Spleen (tissue), 13 donors: ENCODE measurements at regions of chr2 and their contacts with region 1.

Region 1: DNA sequence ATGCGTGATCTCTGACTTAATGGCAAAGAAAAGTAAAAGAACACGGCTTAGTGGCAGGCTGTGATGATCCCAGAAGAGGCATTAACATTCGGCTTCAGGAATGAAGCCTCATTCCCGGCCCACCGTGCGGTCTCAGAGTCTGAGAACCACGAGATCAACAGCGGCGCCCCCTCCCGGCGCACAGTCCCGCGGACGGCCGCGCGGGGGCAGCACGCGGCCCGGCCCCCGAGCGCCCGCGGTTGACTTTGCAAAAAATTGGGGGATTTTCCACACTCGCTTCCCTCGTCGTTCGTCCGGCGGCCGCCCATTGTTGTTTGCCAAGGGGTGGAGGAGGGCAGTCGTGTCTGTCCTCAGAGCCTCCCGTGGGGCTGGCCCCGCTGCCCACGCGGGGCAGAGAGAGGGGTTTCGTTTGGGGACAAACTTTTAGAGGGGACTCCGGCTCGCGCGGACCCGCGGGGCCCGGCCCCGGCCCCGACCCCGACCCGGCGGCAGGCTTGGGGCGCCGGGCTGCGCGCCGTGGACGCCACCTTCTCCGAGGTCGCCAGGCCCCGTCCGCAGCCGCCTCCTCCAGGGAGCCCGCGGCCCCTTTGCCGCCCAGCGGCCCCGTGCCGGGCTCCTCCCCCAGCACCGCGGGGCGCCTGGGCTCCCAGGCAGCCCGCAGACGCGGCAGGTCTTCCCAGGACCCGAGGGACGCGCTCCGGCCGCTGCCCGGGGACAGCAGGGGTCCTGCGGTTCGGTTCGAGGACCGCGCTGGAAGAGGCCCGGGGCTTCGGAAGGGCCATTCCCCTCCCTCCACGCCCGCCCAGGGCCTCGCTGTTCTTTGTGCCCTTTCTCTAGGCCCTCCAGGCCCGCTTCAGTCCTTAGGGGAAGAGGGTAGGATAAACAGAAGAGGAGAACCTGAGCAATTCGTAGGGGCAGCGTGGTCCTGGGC is 3.4 kb upstream of the HS6ST1 start:
- DNase-seq: peak; percentile 96
- H3K4me3 ChIP-seq: peak overlapping the region; percentile 30 to 76 (median 42)
- H3K27ac ChIP-seq: peak overlapping the region in 7 of 8 donors; percentile 79 to 88 (median 85)
- H3K4me1 ChIP-seq: peaks cover 9 to 49% (median 38%) of the 10 kb centered on the region in 6 donors
- H3K27me3 ChIP-seq: peaks cover 0 to 26% (median 0%) of the 10 kb centered on the region in 7 donors
- CTCF ChIP-seq: peak; percentile 56 to 100 (median 98)
- POLR2A ChIP-seq: no peak

Region 2: DNA sequence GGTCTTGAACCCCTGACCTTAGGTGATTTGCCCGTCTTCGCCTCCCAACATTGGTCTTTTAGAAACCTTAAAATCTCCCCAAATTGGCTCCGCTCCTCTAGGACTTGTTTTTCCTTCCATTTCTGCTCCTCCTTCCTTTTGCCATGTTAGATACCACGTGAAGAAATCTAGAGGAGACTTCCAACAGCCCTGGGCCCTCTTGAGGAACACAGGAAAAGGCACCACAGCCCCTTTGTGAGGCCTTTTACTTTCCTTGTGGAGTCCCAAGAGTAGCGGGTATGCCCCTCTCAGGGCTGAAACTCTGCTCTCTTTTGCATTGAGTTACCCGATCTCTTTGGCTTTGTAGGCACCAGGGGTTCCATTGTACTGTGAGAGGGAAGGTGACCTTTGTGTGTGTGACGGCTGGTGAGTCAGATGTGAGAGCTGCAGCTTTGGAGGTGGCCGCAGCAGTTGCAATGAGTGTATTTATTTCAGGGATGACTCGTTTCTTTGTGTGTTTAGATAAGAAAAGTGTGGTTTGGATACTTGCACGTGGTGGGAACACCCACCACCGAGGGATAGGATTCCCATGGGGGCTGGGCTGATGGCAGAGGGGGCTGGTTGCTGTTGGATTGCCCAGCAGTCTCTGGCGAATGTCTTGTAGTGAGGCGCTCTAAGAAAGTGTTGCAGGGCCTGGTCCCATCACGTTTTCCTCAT is 215.0 kb after region 1 on chr2:
- intact Hi-C with region 1: loop called (anchors 10 kb)
- DNase-seq: peak; percentile 24
- H3K4me3 ChIP-seq: no peak overlapping the region
- H3K27ac ChIP-seq: no peak overlapping the region
- H3K4me1 ChIP-seq: no peaks in the 10 kb centered on the region
- H3K27me3 ChIP-seq: no peaks in the 10 kb centered on the region
- CTCF ChIP-seq: no peak
- POLR2A ChIP-seq: no peak

Region 3: DNA sequence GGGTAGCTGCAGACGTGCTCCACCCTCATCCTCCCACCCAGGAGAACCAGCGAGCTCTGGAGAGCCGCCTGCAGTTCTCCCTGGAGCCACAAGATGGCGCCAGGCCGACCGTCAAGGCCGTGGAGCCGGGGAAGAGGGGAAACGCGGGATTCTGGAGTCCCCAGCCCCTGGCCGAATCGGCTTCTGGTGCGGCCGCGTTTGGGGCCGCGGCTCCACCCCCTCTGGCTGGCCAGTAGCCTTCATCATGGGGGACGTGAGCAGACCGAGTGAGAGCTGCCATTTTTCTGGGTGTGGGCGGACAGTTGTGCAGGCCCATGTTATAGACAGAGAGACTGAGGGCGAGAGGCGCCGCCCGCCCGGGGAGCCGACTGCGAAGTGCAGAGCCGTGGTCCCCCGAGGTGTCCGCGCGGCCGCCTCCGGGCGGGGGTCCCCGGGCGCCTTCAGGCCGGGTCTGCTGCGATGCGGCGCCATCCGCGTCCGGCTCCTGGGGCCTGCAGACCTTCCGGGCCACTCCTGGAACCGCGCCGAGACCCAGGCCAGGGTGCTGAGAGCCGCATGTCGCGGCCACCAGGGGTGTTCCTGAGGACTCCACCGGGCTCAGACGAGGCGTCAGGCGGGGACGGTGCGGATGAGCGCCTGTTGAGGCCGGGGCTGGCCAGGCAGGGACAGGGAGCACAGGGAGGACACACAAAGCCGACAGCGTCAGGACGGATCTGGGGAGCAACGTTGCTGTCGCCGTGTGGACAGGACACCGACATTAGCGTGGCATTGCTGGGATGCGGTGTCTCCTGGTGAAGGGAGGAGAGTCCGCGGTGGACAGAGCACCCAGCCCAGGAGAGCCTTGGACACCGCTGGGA is 414.9 kb after region 1 on chr2:
- intact Hi-C with region 1: loop called (anchors 10 kb)
- DNase-seq: peak; percentile 92
- H3K4me3 ChIP-seq: peak overlapping the region in 5 of 8 donors; percentile 2 to 56 (median 24)
- H3K27ac ChIP-seq: peak overlapping the region in 2 of 8 donors; percentile 0 to 46
- H3K4me1 ChIP-seq: peaks cover 34 to 64% (median 48%) of the 10 kb centered on the region in 6 donors
- H3K27me3 ChIP-seq: peaks cover 0 to 31% (median 0%) of the 10 kb centered on the region in 7 donors
- CTCF ChIP-seq: peak; percentile 89 to 99 (median 96)
- POLR2A ChIP-seq: no peak

Region 4: DNA sequence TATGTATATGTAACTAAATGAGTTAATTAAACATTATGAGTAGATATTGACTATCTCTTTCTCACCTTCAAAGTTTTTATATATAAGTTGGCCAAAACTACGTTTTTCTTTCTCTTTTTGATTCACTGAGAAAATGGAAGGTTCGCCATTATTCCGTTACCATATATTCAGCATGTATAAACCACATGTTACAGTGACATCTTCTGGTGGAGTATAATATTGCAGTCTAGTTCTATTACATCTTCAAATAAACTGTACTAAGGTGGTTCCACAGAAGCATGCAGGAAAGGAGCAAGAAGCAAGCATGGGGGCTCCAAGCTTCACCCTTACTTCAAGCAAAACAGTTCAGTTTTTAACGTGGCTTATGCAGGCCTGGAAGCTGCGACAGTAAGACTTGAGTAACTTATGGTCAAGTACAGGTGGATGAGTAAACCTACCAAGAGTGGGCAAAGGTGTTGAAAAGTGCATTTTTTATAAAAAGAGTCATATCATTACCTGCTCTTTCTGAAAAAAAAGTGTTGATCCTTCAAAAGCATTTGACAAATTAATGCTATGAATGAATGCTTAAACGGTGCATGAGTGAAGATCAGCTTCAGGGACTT is 1527.6 kb after region 1 on chr2:
- intact Hi-C with region 1: loop called (anchors 10 kb)
- DNase-seq: no peak
- H3K4me3 ChIP-seq: no peak overlapping the region
- H3K27ac ChIP-seq: no peak overlapping the region
- H3K4me1 ChIP-seq: peaks cover 0 to 7% (median 0%) of the 10 kb centered on the region in 6 donors
- H3K27me3 ChIP-seq: peaks cover 0 to 4% (median 0%) of the 10 kb centered on the region in 7 donors
- CTCF ChIP-seq: peak; percentile 44 to 81 (median 73)
- POLR2A ChIP-seq: no peak